ENCODE measurements at regions of chr11 and their contacts with region 1.

Region 1: DNA sequence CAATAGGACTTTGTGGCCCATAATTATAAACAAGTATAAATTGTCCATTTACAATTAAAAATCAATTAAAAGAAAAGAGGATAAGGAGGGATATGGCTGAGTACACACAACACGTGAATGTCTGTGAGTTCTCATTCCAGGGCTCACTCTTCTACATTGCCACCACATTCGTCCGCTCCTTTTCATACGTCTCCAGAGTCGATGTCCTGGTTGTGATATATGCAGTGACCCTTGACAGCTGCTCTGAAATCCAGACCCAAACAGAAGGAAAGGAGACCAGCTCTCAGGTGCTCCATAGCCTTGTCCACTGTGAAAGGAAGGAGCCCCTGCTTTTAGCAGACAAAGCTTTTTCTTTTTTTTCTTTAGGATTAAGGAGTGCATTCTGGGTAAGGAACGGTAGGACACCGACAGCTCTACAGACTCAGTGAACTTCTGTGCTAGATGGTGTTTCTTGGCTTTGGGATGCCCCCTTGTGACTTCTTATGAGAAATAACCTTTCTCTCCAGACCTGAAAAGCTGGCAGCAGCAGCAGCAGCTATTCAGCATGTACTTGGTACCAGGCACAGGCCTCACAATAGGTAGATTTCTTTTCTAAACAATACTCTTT is 19.7 kb upstream of the DNAJB13 start:
- DNase-seq: peak; percentile 78 to 85
- H3K4me3 ChIP-seq: no peak overlapping the region
- H3K4me3 Mint-ChIP-seq: no peak overlapping the region
- H3K27ac Mint-ChIP-seq: no peak overlapping the region
- H3K4me1 ChIP-seq: no peaks in the 10 kb centered on the region
- H3K4me1 Mint-ChIP-seq: peaks cover 8% of the 10 kb centered on the region
- H3K27me3 ChIP-seq: no peaks in the 10 kb centered on the region
- H3K27me3 Mint-ChIP-seq: no peaks in the 10 kb centered on the region
- CTCF ChIP-seq: peak; percentile 81 to 89

Region 2: GRCh38 chr11:73404048-73404447 is 527.1 kb before region 1 on chr11:
- CTCF ChIA-PET with region 1: interaction called, 5 read pairs
- POLR2A ChIA-PET with region 1: no interaction called
- intact Hi-C with region 1: loop called (anchors 1 kb)
- DNase-seq: peak; percentile 81 to 85
- H3K4me3 ChIP-seq: no peak overlapping the region
- H3K4me3 Mint-ChIP-seq: no peak overlapping the region
- H3K27ac Mint-ChIP-seq: no peak overlapping the region
- H3K4me1 ChIP-seq: no peaks in the 10 kb centered on the region
- H3K4me1 Mint-ChIP-seq: no peaks in the 10 kb centered on the region
- H3K27me3 ChIP-seq: no peaks in the 10 kb centered on the region
- H3K27me3 Mint-ChIP-seq: no peaks in the 10 kb centered on the region
- CTCF ChIP-seq: peak; percentile 71 to 93

Region 3: DNA sequence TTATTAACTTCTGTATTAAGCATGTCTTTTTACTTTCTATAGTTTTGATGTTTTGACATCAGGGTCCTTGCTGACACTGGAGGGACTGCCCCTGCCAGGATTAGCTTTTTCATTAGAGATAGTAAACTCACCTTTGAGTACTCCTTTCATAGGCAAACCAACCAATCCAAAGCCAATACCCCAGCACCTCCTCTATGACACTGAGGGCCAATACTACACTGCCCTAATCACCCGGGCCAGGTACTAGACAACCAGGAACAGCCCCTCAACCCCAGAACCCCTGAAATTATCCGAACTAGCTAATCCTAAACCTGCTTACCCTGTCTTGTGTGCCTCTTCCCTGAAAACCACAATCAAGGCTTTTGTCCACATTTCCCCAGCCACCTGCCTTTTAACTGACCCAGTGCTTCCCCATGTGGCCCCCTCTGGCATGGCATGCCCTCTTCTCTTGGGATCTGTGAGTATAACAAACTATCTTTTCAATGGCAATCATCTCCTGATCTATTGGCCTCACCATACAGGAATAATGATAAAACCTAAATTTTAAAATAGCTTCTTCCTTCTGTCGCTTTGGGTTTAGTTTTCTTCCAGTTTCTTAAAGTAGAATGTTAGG is 201.4 kb before region 1 on chr11:
- CTCF ChIA-PET with region 1: no interaction called
- POLR2A ChIA-PET with region 1: no interaction called
- intact Hi-C with region 1: loop called (anchors 10 kb)
- DNase-seq: peak; percentile 65 to 74
- H3K4me3 ChIP-seq: no peak overlapping the region
- H3K4me3 Mint-ChIP-seq: no peak overlapping the region
- H3K27ac Mint-ChIP-seq: peak overlapping the region; percentile 24
- H3K4me1 ChIP-seq: no peaks in the 10 kb centered on the region
- H3K4me1 Mint-ChIP-seq: peaks cover 5% of the 10 kb centered on the region
- H3K27me3 ChIP-seq: no peaks in the 10 kb centered on the region
- H3K27me3 Mint-ChIP-seq: no peaks in the 10 kb centered on the region
- CTCF ChIP-seq: peak; percentile 85 to 90

Region 4: GRCh38 chr11:73779084-73779902 is 151.8 kb before region 1 on chr11:
- CTCF ChIA-PET with region 1: interaction called, 10 read pairs
- POLR2A ChIA-PET with region 1: interaction called, 4 read pairs
- intact Hi-C with region 1: loop called (anchors 1 kb)
- DNase-seq: peak; percentile 100
- H3K4me3 ChIP-seq: peak overlapping the region; percentile 72
- H3K4me3 Mint-ChIP-seq: peak overlapping the region; percentile 99
- H3K27ac Mint-ChIP-seq: peak overlapping the region; percentile 99
- H3K4me1 ChIP-seq: peaks cover 21% of the 10 kb centered on the region
- H3K4me1 Mint-ChIP-seq: peaks cover 16% of the 10 kb centered on the region
- H3K27me3 ChIP-seq: no peaks in the 10 kb centered on the region
- H3K27me3 Mint-ChIP-seq: no peaks in the 10 kb centered on the region
- CTCF ChIP-seq: no peak

Region 5: GRCh38 chr11:73876424-73877300 is 54.5 kb before region 1 on chr11 and contains the starts of genes COA4 and PAAF1:
- CTCF ChIA-PET with region 1: interaction called, 5 read pairs
- POLR2A ChIA-PET with region 1: no interaction called
- intact Hi-C with region 1: loop called (anchors 1 kb)
- DNase-seq: peak; percentile 100
- H3K4me3 ChIP-seq: peak within 1 kb of the TSS; percentile 62
- H3K4me3 Mint-ChIP-seq: peak within 1 kb of the TSS; percentile 91
- H3K27ac Mint-ChIP-seq: peak within 1 kb of the TSS; percentile 95
- H3K4me1 ChIP-seq: peaks cover 23% of the 10 kb centered on the region
- H3K4me1 Mint-ChIP-seq: peaks cover 6% of the 10 kb centered on the region
- H3K27me3 ChIP-seq: no peaks in the 10 kb centered on the region
- H3K27me3 Mint-ChIP-seq: no peaks in the 10 kb centered on the region
- CTCF ChIP-seq: no peak
- total RNA-seq, gene COA4: 127 and 137 TPM in 2 replicates
- total RNA-seq, gene PAAF1: 51.6 and 53.4 TPM in 2 replicates

Measured in Caco-2 (cell line).